ENCODE measurements at regions of chr22 and their contacts with region 1.

Region 1: GRCh38 chr22:31345331-31346254 is 553 bp downstream of the PATZ1 start:
- DNase-seq: peak; percentile 89 to 92
- ATAC-seq: peak; percentile 74 to 83 (median 82)
- H3K4me3 ChIP-seq: peak overlapping the region; percentile 81
- H3K27ac ChIP-seq: peak overlapping the region; percentile 74
- H3K4me1 ChIP-seq: peaks cover 24% of the 10 kb centered on the region
- H3K27me3 ChIP-seq: no peaks in the 10 kb centered on the region
- CTCF ChIP-seq: peak; percentile 80

Region 2: DNA sequence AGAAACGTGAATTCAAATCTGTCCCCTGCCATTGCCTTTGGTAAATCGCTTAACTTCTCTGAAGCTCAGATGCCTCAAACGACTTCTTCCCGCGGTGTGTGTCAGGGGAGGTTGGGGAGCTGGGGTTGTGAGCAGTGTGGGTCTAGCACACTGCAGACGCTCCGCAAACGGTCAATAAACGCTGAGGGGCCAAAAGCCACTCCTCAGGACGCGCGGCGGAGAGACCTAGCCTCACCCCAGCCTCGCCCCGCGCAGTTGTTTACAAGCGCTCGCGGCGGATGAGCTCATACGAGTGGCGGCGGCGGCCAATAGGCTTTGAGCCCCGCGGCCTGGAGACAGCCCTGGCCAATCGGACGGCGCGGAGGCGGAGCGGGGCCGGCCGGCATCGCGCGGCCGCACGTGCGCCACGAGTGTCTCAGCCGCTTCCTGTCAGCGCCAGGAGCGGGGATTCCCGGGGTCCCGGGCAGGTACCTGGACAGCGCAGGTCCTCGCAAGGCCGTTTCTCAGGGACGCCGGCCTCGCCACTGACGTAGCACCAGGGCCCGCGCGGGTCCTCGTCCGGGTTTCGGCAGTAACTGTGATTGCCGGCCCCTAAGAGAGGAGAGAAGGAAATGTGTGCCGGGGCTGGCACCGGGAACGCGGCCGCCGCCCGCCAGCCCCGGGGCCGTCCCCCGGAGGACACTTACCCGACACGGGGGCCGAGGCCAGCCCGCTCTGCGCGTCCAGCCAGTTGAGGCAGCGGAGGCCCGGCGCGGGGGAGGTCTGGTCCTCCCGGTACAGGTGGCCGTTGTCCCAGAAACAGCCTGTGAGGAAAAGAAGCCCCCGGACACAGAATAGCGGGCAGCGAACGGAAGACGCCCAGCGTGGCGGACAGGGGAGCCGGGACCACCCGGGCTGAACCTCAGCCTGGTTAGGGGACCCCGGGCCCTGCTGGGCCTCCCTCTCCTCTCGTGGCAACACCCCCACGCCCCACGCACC is 54.8 kb before region 1 on chr22:
- intact Hi-C with region 1: loop called in 1 of 2 experiments (anchors 5 kb)
- DNase-seq: peak; percentile 96 to 98
- ATAC-seq: peak; percentile 88 to 94 (median 91)
- H3K4me3 ChIP-seq: peak overlapping the region; percentile 87
- H3K27ac ChIP-seq: peak overlapping the region; percentile 98
- H3K4me1 ChIP-seq: peaks cover 40% of the 10 kb centered on the region
- H3K27me3 ChIP-seq: no peaks in the 10 kb centered on the region
- CTCF ChIP-seq: no peak

Region 3: GRCh38 chr22:31399211-31400028 is 53.8 kb after region 1 on chr22 and contains the start of gene DRG1:
- intact Hi-C with region 1: loop called (anchors 1 to 2 kb)
- DNase-seq: peak; percentile 98 to 99
- ATAC-seq: peak; percentile 99
- H3K4me3 ChIP-seq: peak within 1 kb of the TSS; percentile 87
- H3K27ac ChIP-seq: peak within 1 kb of the TSS; percentile 90
- H3K4me1 ChIP-seq: peaks cover 9% of the 10 kb centered on the region
- H3K27me3 ChIP-seq: no peaks in the 10 kb centered on the region
- CTCF ChIP-seq: no peak
- total RNA-seq, gene DRG1: 75.2 to 91.8 (median 85.6) TPM

Region 4: GRCh38 chr22:31474743-31475142 is 129.2 kb after region 1 on chr22:
- intact Hi-C with region 1: no loop called
- DNase-seq: no peak
- ATAC-seq: no peak
- H3K4me3 ChIP-seq: no peak overlapping the region
- H3K27ac ChIP-seq: no peak overlapping the region
- H3K4me1 ChIP-seq: peaks cover 8% of the 10 kb centered on the region
- H3K27me3 ChIP-seq: no peaks in the 10 kb centered on the region
- CTCF ChIP-seq: no peak

Region 5: GRCh38 chr22:31489604-31490495 is 144.3 kb after region 1 on chr22 and contains the start of gene EIF4ENIF1:
- intact Hi-C with region 1: loop called in 1 of 2 experiments (anchors 10 kb)
- DNase-seq: peak; percentile 91 to 94
- ATAC-seq: peak; percentile 92 to 95 (median 94)
- H3K4me3 ChIP-seq: peak within 1 kb of the TSS; percentile 92
- H3K27ac ChIP-seq: peak within 1 kb of the TSS; percentile 98
- H3K4me1 ChIP-seq: peaks cover 40% of the 10 kb centered on the region
- H3K27me3 ChIP-seq: no peaks in the 10 kb centered on the region
- CTCF ChIP-seq: no peak
- total RNA-seq, gene EIF4ENIF1: 24.8 to 34.2 (median 26.6) TPM

Region 6: GRCh38 chr22:31630331-31631329 is 285.0 kb after region 1 on chr22:
- intact Hi-C with region 1: loop called (anchors 5 kb)
- DNase-seq: peak; percentile 87 to 89
- ATAC-seq: peak; percentile 36 to 75 (median 62)
- H3K4me3 ChIP-seq: peak overlapping the region; percentile 79
- H3K27ac ChIP-seq: peak overlapping the region; percentile 83
- H3K4me1 ChIP-seq: peaks cover 38% of the 10 kb centered on the region
- H3K27me3 ChIP-seq: no peaks in the 10 kb centered on the region
- CTCF ChIP-seq: no peak

Measured in psoas muscle (tissue), 8 donors.